ENCODE measurements at regions of chr21 and their contacts with region 1.

Region 1: GRCh38 chr21:36927719-36928117 is 38.8 kb downstream of the HLCS start:
- DNase-seq: peak; percentile 43 to 79 (median 71)
- ATAC-seq: peak; percentile 52
- H3K4me3 ChIP-seq: no peak overlapping the region
- H3K4me3 Mint-ChIP-seq: no peak overlapping the region
- H3K27ac ChIP-seq: no peak overlapping the region
- H3K27ac Mint-ChIP-seq: no peak overlapping the region
- H3K4me1 ChIP-seq: peaks cover 13% of the 10 kb centered on the region
- H3K4me1 Mint-ChIP-seq: peaks cover 10% of the 10 kb centered on the region
- H3K27me3 ChIP-seq: no peaks in the 10 kb centered on the region
- H3K27me3 Mint-ChIP-seq: no peaks in the 10 kb centered on the region
- CTCF ChIP-seq: peak; percentile 83

Region 2: DNA sequence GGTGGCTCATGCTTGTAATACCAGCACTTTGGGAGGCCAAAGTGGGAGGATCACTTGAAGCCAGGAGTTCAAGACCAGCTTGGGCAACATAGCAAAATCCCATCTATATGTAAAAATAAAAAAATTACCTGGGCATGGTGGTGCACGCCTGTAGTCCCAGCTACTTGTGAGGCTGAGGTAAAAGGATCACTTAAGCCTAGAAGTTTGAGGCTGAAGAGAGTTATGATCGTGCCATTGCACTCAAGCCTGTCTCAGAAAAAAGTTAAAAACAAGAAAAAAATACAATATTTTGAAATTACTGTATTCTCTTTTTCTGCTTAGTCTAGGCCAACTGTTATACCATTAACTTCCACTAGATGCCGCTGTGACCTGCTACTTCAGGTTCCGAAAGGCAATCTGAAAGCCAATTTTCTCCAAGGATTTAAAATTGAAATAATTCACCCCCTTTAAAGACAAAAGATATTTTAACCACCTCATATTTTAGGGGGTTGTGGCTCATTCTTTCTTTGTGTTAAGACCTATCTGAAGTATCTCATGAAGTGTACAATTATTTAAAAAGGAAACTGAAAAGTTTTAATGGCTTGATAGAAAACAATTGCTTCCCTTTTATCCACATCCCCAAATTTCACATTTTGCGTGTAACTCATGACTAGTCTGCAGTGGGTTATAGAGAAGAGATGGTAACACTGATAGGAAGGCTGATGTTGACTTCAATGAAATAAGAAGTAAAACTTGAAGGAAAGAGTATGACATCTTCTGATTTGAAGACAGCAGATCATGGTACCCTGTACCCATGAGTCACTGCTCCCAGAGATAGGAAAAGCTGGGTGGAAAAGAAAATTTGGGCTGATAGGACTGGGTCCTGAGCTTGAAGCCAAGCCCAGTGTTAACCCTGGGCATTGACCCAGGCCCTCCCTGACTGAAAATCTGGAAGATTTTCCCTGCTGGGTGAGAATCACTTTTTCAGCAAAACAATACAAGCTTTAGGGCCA is 423.4 kb before region 1 on chr21:
- CTCF ChIA-PET with region 1: interaction called, 65 read pairs
- POLR2A ChIA-PET with region 1: no interaction called
- intact Hi-C with region 1: loop called in 1 of 2 experiments (anchors 1 kb)
- DNase-seq: peak in 6 of 9 experiments; percentile 15 to 67 (median 50)
- ATAC-seq: no peak
- H3K4me3 ChIP-seq: no peak overlapping the region
- H3K4me3 Mint-ChIP-seq: no peak overlapping the region
- H3K27ac ChIP-seq: no peak overlapping the region
- H3K27ac Mint-ChIP-seq: no peak overlapping the region
- H3K4me1 ChIP-seq: no peaks in the 10 kb centered on the region
- H3K4me1 Mint-ChIP-seq: no peaks in the 10 kb centered on the region
- H3K27me3 ChIP-seq: no peaks in the 10 kb centered on the region
- H3K27me3 Mint-ChIP-seq: peaks cover 2% of the 10 kb centered on the region
- CTCF ChIP-seq: peak; percentile 97

Region 3: GRCh38 chr21:36589355-36589971 is 338.3 kb before region 1 on chr21:
- CTCF ChIA-PET with region 1: interaction called, 24 read pairs
- POLR2A ChIA-PET with region 1: no interaction called
- intact Hi-C with region 1: loop called in 1 of 2 experiments (anchors 1 kb)
- DNase-seq: peak in 4 of 9 experiments; percentile 7 to 27 (median 12)
- ATAC-seq: no peak
- H3K4me3 ChIP-seq: no peak overlapping the region
- H3K4me3 Mint-ChIP-seq: no peak overlapping the region
- H3K27ac ChIP-seq: no peak overlapping the region
- H3K27ac Mint-ChIP-seq: no peak overlapping the region
- H3K4me1 ChIP-seq: no peaks in the 10 kb centered on the region
- H3K4me1 Mint-ChIP-seq: peaks cover 7% of the 10 kb centered on the region
- H3K27me3 ChIP-seq: no peaks in the 10 kb centered on the region
- H3K27me3 Mint-ChIP-seq: no peaks in the 10 kb centered on the region
- CTCF ChIP-seq: no peak

Region 4: GRCh38 chr21:36915696-36916245 is 11.9 kb before region 1 on chr21:
- CTCF ChIA-PET with region 1: interaction called, 10 read pairs
- POLR2A ChIA-PET with region 1: no interaction called
- intact Hi-C with region 1: no loop called
- DNase-seq: no peak
- ATAC-seq: no peak
- H3K4me3 ChIP-seq: no peak overlapping the region
- H3K4me3 Mint-ChIP-seq: no peak overlapping the region
- H3K27ac ChIP-seq: no peak overlapping the region
- H3K27ac Mint-ChIP-seq: no peak overlapping the region
- H3K4me1 ChIP-seq: peaks cover 4% of the 10 kb centered on the region
- H3K4me1 Mint-ChIP-seq: peaks cover 17% of the 10 kb centered on the region
- H3K27me3 ChIP-seq: no peaks in the 10 kb centered on the region
- H3K27me3 Mint-ChIP-seq: no peaks in the 10 kb centered on the region
- CTCF ChIP-seq: no peak